ENCODE measurements at regions of chr20 and their contacts with region 1.

Region 1: GRCh38 chr20:9214685-9215084 is 145.8 kb downstream of the PLCB4 start:
- DNase-seq: peak; percentile 35
- H3K4me3 ChIP-seq: no peak overlapping the region
- H3K27ac ChIP-seq: no peak overlapping the region
- H3K4me1 ChIP-seq: no peaks in the 10 kb centered on the region
- H3K27me3 ChIP-seq: no peaks in the 10 kb centered on the region
- CTCF ChIP-seq: no peak

Region 2: GRCh38 chr20:8504030-8504429 is 710.7 kb before region 1 on chr20:
- CTCF ChIA-PET with region 1: no interaction called
- dilution Hi-C with region 1: no loop called
- in situ Hi-C with region 1: no loop called
- intact Hi-C with region 1: no loop called
- DNase-seq: no peak
- H3K4me3 ChIP-seq: no peak overlapping the region
- H3K27ac ChIP-seq: no peak overlapping the region
- H3K4me1 ChIP-seq: no peaks in the 10 kb centered on the region
- H3K27me3 ChIP-seq: peaks cover 3% of the 10 kb centered on the region
- CTCF ChIP-seq: no peak

Region 3: GRCh38 chr20:9021701-9022103 is 193.0 kb before region 1 on chr20:
- CTCF ChIA-PET with region 1: no interaction called
- dilution Hi-C with region 1: no loop called
- in situ Hi-C with region 1: no loop called
- intact Hi-C with region 1: no loop called
- DNase-seq: peak; percentile 45
- H3K4me3 ChIP-seq: no peak overlapping the region
- H3K27ac ChIP-seq: no peak overlapping the region
- H3K4me1 ChIP-seq: peaks cover 5% of the 10 kb centered on the region
- H3K27me3 ChIP-seq: no peaks in the 10 kb centered on the region
- CTCF ChIP-seq: no peak

Region 4: GRCh38 chr20:9119776-9120175 is 94.9 kb before region 1 on chr20:
- CTCF ChIA-PET with region 1: no interaction called
- dilution Hi-C with region 1: no loop called
- in situ Hi-C with region 1: no loop called
- intact Hi-C with region 1: no loop called
- DNase-seq: peak; percentile 82
- H3K4me3 ChIP-seq: peak overlapping the region; percentile 1 to 29 (median 8)
- H3K27ac ChIP-seq: peak overlapping the region; percentile 56
- H3K4me1 ChIP-seq: peaks cover 11% of the 10 kb centered on the region
- H3K27me3 ChIP-seq: no peaks in the 10 kb centered on the region
- CTCF ChIP-seq: no peak

Region 5: DNA sequence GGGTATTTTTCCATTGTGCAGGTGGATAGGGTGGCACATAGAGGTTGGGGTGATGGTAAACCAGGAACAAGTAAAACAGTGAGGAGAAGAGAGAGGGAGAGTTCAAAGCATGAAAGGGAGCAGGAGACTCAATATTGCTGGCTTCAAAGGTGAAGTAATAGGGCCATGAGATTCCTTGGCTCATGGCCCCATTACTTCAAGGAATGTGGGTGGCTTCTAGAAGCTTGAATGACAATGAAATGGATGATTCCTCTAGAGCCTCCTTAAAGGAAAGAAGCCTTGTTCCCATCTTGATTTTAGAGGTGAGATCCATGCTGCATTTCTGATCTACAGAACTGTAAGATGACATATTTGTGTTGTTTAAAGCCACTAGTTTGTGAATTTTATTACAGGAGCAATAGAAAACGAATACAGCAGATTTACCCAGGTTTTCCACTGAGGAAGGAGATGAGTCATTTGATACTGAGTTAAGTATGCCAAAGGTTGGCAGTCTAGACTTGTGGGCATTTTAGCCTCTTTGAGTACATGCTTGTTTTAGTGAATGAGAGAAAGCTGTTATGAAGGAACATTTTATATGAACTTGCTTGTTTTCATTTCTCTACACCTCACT is 35.4 kb before region 1 on chr20:
- CTCF ChIA-PET with region 1: no interaction called
- dilution Hi-C with region 1: loop called (anchors 5 kb)
- in situ Hi-C with region 1: no loop called
- intact Hi-C with region 1: no loop called
- DNase-seq: peak; percentile 12
- H3K4me3 ChIP-seq: no peak overlapping the region
- H3K27ac ChIP-seq: no peak overlapping the region
- H3K4me1 ChIP-seq: peaks cover 11% of the 10 kb centered on the region
- H3K27me3 ChIP-seq: no peaks in the 10 kb centered on the region
- CTCF ChIP-seq: no peak